ENCODE measurements at regions of chr1 and their contacts with region 1.

Region 1: GRCh38 chr1:223142795-223143536 is at the start of gene TLR5:
- DNase-seq: peak; percentile 84
- H3K4me3 Mint-ChIP-seq: peak within 1 kb of the TSS; percentile 66
- H3K27ac Mint-ChIP-seq: peak within 1 kb of the TSS; percentile 16
- H3K4me1 Mint-ChIP-seq: peaks cover 9% of the 10 kb centered on the region
- H3K27me3 Mint-ChIP-seq: peaks cover 7% of the 10 kb centered on the region
- total RNA-seq, gene TLR5: 0.34 and 0.41 TPM in 2 replicates

Region 2: GRCh38 chr1:222994506-222995235 is 148.3 kb before region 1 on chr1:
- intact Hi-C with region 1: no loop called
- DNase-seq: no peak
- H3K4me3 Mint-ChIP-seq: no peak overlapping the region
- H3K27ac Mint-ChIP-seq: no peak overlapping the region
- H3K4me1 Mint-ChIP-seq: no peaks in the 10 kb centered on the region
- H3K27me3 Mint-ChIP-seq: no peaks in the 10 kb centered on the region

Region 3: DNA sequence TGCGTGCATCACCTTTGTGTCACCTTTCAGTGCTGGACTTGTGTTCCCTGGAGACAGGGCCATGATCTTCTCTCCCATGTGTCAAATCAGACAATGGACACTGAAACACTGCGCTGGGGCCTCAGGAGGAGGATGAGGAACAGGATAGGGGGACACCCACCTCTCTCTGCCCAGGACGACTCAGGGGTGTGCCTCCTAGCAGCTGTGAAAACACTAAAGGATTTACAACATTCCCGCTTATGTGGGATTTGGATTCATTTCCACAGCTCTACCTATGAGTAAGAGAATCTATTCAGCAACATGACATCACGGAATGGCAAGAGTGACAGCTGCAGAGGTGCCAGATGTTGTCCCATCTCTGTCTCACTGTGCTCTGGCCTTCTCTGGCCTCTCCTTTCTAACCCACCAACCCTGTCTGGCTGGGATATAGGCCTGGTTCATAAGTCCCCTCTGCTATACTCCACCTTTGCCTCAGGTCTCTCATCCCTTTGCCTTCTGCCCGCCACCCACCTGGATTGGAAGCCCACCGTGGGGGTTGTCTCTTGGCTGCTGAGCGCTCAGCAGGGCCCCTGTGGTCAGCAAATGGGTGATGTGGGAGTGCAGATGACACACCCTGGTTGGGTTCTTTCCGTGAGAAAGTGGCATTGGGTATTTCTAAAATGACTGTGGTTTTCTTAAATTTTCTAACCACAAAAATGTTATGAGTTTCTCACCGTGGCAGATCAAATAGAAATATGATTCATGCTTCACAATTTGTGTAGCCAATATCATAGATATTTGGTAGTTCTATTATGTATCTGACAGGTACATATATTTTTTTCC is 47.1 kb after region 1 on chr1:
- intact Hi-C with region 1: loop called (anchors 2 kb)
- DNase-seq: peak; percentile 45
- H3K4me3 Mint-ChIP-seq: no peak overlapping the region
- H3K27ac Mint-ChIP-seq: peak overlapping the region; percentile 80
- H3K4me1 Mint-ChIP-seq: peaks cover 25% of the 10 kb centered on the region
- H3K27me3 Mint-ChIP-seq: peaks cover 30% of the 10 kb centered on the region

Region 4: GRCh38 chr1:223233410-223234169 is 90.6 kb after region 1 on chr1:
- intact Hi-C with region 1: loop called (anchors 5 kb)
- DNase-seq: no peak
- H3K4me3 Mint-ChIP-seq: no peak overlapping the region
- H3K27ac Mint-ChIP-seq: peak overlapping the region; percentile 36
- H3K4me1 Mint-ChIP-seq: peaks cover 55% of the 10 kb centered on the region
- H3K27me3 Mint-ChIP-seq: peaks cover 1% of the 10 kb centered on the region

Region 5: DNA sequence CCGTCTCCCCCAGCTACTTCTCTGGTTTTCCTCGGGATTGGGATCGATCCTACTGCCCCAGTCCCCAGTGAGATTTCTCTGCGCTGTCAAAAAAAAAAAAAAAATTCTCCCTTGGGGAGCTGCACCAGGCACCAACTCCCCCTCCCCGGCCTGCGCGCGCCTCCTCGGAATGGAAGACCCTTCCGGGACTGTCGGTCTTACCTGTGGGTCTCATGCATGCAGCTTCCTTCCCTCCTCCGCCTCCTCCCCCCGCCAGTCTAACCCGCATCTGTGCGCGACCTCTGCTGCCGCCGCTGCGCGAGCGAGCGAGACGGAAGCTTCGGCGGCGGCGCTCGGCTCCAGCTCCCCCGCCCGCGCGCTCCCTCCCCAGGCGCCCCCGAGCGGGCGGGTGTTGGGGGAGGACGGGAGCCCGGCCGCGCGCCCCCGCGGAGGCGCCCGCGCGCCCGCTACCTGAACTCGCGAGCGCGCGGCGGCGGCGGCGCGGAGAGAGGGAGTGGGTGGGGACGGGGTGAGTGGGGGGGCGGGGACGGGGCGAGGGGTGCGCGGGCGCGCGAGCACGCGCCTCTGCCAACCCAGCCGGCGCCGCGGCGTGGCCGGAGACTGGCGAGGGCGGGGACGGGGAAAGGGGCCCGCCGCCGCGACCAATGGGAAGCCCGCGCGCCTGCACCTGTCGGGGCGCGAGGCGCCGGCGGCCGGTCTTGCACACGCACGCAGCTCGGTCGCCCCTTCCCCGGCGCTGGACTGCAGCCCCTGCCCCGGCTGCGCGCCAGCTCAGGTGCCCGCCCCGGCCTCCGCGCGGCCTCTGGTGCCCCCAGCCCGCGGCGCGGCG is 221.1 kb after region 1 on chr1 and contains the start of gene SUSD4:
- intact Hi-C with region 1: loop called (anchors 5 kb)
- DNase-seq: peak; percentile 45
- H3K4me3 Mint-ChIP-seq: peak within 1 kb of the TSS; percentile 81
- H3K27ac Mint-ChIP-seq: no peak within 1 kb of the TSS
- H3K4me1 Mint-ChIP-seq: peaks cover 7% of the 10 kb centered on the region
- H3K27me3 Mint-ChIP-seq: peaks cover 56% of the 10 kb centered on the region
- total RNA-seq, gene SUSD4: 0.18 and 0.34 TPM in 2 replicates